ENCODE measurements at regions of chr9 and their contacts with region 1.

Region 1: DNA sequence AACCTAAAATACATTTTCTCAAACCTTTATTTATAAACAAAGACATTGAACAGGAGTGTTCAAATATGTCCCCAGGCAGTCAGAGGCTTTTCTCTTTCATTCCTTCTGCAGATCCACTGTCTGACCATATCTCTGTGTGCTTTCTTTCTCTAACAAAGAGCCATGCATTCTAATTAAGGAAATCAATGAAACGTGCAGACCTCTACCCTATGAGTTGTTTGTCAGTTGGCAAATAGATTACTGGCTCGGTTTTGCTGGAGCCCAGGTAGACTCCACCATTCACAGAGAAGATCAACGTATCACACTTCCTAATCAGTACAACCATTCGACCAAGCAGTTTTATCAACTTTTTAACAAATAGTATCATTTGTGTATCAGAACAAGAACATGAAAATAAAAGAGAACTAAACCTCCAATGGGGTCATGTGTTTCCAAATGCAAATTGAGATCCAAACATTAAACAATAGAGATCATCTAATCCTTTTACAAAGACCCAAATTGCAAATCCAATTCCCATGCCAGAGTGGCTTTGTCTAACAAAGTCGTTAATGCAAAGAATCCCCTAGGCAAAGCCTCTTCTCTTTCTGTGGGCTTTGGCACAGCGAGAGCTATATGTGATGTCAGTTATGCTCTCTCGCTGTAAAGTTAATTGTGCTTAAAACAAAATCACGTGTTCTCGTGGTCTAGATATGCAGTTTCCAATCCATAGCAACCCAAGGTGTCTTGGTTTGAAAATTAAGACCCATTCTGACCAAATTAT is 16.8 kb downstream of the KLF4 start:
- DNase-seq: no peak
- H3K4me3 ChIP-seq: no peak overlapping the region
- H3K27ac ChIP-seq: no peak overlapping the region
- H3K4me1 ChIP-seq: no peaks in the 10 kb centered on the region
- CTCF ChIP-seq: no peak

Region 2: DNA sequence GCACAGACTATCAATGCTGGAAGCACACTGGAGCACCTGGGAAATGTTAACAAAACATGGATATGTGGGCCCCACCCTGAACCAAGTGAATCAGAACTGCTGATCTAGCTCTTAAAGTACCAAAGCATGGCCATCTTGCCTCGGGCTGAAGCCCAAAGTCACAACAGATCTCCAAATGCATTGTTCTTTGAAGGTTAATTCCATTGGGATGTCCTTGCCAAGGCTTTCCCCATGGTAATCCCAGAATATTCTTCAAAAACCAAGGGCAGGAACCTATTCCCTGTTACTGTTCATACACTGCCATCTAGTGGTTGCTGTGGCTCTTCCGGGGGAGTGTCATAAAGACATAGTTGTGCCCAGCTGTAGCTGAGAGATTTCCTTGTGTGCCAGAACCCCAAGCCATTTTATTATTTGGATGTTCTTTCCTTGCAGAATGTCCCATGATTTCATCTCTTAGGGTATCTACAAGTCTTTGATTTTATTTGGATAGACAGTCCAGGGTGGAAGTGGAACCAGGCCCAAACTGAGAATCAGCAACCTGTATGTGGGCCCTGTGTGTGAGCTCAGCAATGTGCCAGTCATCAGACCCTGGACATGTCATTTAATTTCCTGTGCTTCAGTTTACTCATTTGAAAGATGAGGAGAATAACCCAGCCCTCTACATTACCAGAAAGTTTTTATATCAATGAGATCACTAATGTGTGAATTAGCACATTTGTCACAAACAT is 1093.1 kb after region 1 on chr9:
- CTCF ChIA-PET with region 1: no interaction called
- POLR2A ChIA-PET with region 1: no interaction called
- intact Hi-C with region 1: loop called (anchors 10 kb)
- DNase-seq: peak; percentile 66
- H3K4me3 ChIP-seq: no peak overlapping the region
- H3K27ac ChIP-seq: no peak overlapping the region
- H3K4me1 ChIP-seq: no peaks in the 10 kb centered on the region
- CTCF ChIP-seq: peak; percentile 95

Measured in OCI-LY7 (cell line).